Breast epithelium (tissue), 4 donors: ENCODE measurements at regions of chrX and their contacts with region 1.

Region 1: GRCh38 chrX:130637591-130637990 is 235.8 kb downstream of the RBMX2 start:
- DNase-seq: no peak
- H3K4me3 ChIP-seq: no peak overlapping the region
- H3K27ac ChIP-seq: no peak overlapping the region
- H3K4me1 ChIP-seq: no peaks in the 10 kb centered on the region
- H3K27me3 ChIP-seq: peaks cover 0 to 6% of the 10 kb centered on the region in 2 donors
- CTCF ChIP-seq: no peak
- POLR2A ChIP-seq: no peak

Region 2: DNA sequence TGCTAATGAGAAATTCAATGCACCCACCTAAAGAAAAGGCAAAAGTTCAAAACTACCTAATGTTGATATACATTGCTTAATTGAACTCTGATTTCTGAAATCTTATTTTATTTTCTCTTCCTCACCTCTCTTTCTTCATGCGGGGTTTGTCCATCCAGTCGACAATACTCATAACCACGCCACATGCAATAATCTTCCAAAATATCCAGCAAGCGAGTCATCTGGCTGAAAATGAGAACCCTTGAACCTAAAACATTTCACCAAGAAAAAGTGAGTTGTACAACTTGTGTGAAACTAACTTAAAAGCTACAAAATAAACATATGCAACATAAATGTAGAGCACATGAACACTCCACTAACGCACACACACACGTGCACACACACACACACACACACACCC is 1141.0 kb before region 1 on chrX:
- intact Hi-C with region 1: loop called (anchors 10 kb)
- DNase-seq: no peak
- H3K4me3 ChIP-seq: no peak overlapping the region
- H3K27ac ChIP-seq: no peak overlapping the region
- H3K4me1 ChIP-seq: no peaks in the 10 kb centered on the region
- H3K27me3 ChIP-seq: no peaks in the 10 kb centered on the region
- CTCF ChIP-seq: no peak
- POLR2A ChIP-seq: no peak

Region 3: DNA sequence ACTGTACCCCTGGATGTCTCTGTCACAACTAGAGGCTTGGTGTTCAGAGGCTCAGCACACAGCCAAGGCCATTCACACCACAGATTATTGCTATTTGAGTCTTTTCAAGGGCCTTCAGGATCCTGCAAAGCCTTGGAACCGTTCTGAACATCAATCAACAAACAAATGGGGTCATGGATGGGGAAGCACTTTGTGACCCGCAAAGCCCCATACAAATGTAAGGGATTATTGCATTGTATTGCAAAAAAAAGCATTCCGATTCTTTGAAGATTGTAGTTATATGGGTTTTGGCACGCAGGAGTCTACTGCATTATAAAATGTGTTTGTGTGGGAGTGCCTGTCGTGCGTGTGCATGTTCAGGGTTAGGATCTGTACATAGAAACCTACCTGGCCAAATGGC is 672.4 kb before region 1 on chrX:
- intact Hi-C with region 1: no loop called
- DNase-seq: no peak
- H3K4me3 ChIP-seq: no peak overlapping the region
- H3K27ac ChIP-seq: no peak overlapping the region
- H3K4me1 ChIP-seq: no peaks in the 10 kb centered on the region
- H3K27me3 ChIP-seq: peaks cover 0 to 4% of the 10 kb centered on the region in 2 donors
- CTCF ChIP-seq: no peak
- POLR2A ChIP-seq: no peak